CD4-positive, alpha-beta T cell (primary cell): ENCODE measurements at regions of chr11 and their contacts with region 1.

Region 1: DNA sequence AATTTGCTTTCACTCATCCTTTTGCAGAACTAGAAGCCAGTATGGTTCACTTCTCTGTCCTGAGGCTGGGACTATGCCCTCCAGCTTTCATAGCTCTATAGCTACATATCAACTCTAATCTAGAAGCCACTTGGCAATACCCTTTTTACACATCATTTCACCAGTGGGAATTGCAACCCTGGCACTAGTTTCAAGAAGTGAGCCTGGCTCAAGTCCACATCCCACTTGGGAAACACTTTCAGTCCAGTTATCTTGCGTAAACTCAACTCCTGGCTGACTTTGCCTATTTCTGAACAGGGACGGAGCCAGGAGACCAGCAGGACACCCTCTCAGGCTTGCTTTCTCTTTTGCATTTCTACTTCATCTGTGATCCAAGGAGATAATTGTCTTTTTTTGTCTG is 19.9 kb upstream of the FAT3 start:
- DNase-seq: no peak
- ATAC-seq: no peak
- H3K4me3 ChIP-seq: no peak overlapping the region
- H3K4me3 Mint-ChIP-seq: no peak overlapping the region
- H3K27ac ChIP-seq: no peak overlapping the region
- H3K27ac Mint-ChIP-seq: no peak overlapping the region
- H3K4me1 ChIP-seq: no peaks in the 10 kb centered on the region
- H3K4me1 Mint-ChIP-seq: no peaks in the 10 kb centered on the region
- H3K27me3 ChIP-seq: no peaks in the 10 kb centered on the region
- H3K27me3 Mint-ChIP-seq: peaks cover 1% of the 10 kb centered on the region
- CTCF ChIP-seq: no peak

Region 2: GRCh38 chr11:92179017-92179670 is 25.6 kb before region 1 on chr11:
- CTCF ChIA-PET with region 1: no interaction called
- POLR2A ChIA-PET with region 1: no interaction called
- intact Hi-C with region 1: no loop called
- DNase-seq: no peak
- ATAC-seq: no peak
- H3K4me3 ChIP-seq: no peak overlapping the region
- H3K4me3 Mint-ChIP-seq: no peak overlapping the region
- H3K27ac ChIP-seq: no peak overlapping the region
- H3K27ac Mint-ChIP-seq: no peak overlapping the region
- H3K4me1 ChIP-seq: no peaks in the 10 kb centered on the region
- H3K4me1 Mint-ChIP-seq: no peaks in the 10 kb centered on the region
- H3K27me3 ChIP-seq: no peaks in the 10 kb centered on the region
- H3K27me3 Mint-ChIP-seq: no peaks in the 10 kb centered on the region
- CTCF ChIP-seq: no peak

Region 3: DNA sequence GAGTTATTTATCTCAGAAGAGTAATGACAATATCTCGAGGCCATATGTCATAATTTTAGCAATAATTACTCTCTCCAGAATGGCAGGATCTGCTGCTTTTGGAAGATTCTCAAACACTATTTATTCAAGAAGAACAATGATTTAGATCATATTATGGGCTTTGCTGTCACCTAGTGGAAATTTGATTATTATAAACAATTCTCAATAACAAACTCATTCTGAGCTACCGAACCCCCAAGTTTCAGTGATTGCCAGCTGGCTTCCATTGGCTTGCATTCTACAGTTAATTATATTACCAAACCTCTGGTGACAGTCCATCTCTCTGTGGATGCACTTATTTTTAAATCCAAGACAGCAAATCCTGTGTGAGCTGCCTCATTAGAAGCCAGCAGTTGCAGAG is 1020.9 kb after region 1 on chr11:
- CTCF ChIA-PET with region 1: no interaction called
- POLR2A ChIA-PET with region 1: no interaction called
- intact Hi-C with region 1: loop called in 1 of 2 experiments (anchors 5 kb)
- DNase-seq: peak in 3 of 14 experiments; percentile 32 to 42 (median 42)
- ATAC-seq: no peak
- H3K4me3 ChIP-seq: no peak overlapping the region
- H3K4me3 Mint-ChIP-seq: no peak overlapping the region
- H3K27ac ChIP-seq: no peak overlapping the region
- H3K27ac Mint-ChIP-seq: no peak overlapping the region
- H3K4me1 ChIP-seq: no peaks in the 10 kb centered on the region
- H3K4me1 Mint-ChIP-seq: no peaks in the 10 kb centered on the region
- H3K27me3 ChIP-seq: peaks cover 0 to 4% of the 10 kb centered on the region in 2 experiments
- H3K27me3 Mint-ChIP-seq: peaks cover 6% of the 10 kb centered on the region
- CTCF ChIP-seq: peak; percentile 62